ENCODE measurements at regions of chr1 and their contacts with region 1.

Region 1: GRCh38 chr1:244605835-244606370 is 47.0 kb upstream of the DESI2 start:
- DNase-seq: no peak
- H3K4me3 ChIP-seq: no peak overlapping the region
- H3K4me1 ChIP-seq: no peaks in the 10 kb centered on the region
- H3K27me3 ChIP-seq: no peaks in the 10 kb centered on the region

Region 2: DNA sequence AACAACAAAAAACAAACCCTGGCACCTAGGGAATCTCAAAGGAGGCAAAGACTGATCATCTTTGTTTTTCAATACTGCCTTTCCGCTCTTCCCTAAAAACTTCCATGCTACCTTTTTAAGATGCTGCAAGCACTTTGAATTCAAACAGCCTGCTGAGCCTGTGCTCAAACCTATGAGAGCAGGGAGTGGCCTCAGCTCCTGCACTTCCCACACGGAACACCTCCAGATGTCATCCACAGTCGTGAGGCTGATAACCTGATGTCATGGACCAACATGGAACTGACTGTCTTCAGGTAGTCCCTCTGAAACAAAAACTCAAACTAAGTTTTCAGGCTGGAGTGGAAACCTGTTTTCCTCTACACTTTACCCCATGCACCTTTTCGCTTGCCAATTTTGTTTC is 93.8 kb after region 1 on chr1:
- in situ Hi-C with region 1: no loop called
- DNase-seq: no peak
- H3K4me3 ChIP-seq: no peak overlapping the region
- H3K4me1 ChIP-seq: no peaks in the 10 kb centered on the region
- H3K27me3 ChIP-seq: no peaks in the 10 kb centered on the region

Region 3: GRCh38 chr1:244796718-244797406 is 191.0 kb after region 1 on chr1:
- in situ Hi-C with region 1: loop called (anchors 5 kb)
- DNase-seq: peak; percentile 64 to 79
- H3K4me3 ChIP-seq: no peak overlapping the region
- H3K4me1 ChIP-seq: no peaks in the 10 kb centered on the region
- H3K27me3 ChIP-seq: no peaks in the 10 kb centered on the region

Measured in HAP-1 (cell line).